ENCODE measurements at regions of chr6 and their contacts with region 1.

Region 1: GRCh38 chr6:137866914-137867684 is at the start of gene TNFAIP3:
- DNase-seq: peak; percentile 96
- CTCF ChIP-seq: peak; percentile 87

Region 2: GRCh38 chr6:137697267-137697938 is 169.7 kb before region 1 on chr6:
- CTCF ChIA-PET with region 1: interaction called, 10 read pairs
- POLR2A ChIA-PET with region 1: no interaction called
- DNase-seq: no peak
- CTCF ChIP-seq: peak; percentile 26

Region 3: GRCh38 chr6:137799950-137800568 is 67.0 kb before region 1 on chr6:
- CTCF ChIA-PET with region 1: interaction called, 29 read pairs
- POLR2A ChIA-PET with region 1: no interaction called
- DNase-seq: peak; percentile 53
- CTCF ChIP-seq: peak; percentile 60

Region 4: GRCh38 chr6:137878486-137879285 is 11.6 kb after region 1 on chr6:
- CTCF ChIA-PET with region 1: interaction called, 58 read pairs
- POLR2A ChIA-PET with region 1: interaction called, 14 read pairs
- DNase-seq: no peak
- CTCF ChIP-seq: no peak

Region 5: DNA sequence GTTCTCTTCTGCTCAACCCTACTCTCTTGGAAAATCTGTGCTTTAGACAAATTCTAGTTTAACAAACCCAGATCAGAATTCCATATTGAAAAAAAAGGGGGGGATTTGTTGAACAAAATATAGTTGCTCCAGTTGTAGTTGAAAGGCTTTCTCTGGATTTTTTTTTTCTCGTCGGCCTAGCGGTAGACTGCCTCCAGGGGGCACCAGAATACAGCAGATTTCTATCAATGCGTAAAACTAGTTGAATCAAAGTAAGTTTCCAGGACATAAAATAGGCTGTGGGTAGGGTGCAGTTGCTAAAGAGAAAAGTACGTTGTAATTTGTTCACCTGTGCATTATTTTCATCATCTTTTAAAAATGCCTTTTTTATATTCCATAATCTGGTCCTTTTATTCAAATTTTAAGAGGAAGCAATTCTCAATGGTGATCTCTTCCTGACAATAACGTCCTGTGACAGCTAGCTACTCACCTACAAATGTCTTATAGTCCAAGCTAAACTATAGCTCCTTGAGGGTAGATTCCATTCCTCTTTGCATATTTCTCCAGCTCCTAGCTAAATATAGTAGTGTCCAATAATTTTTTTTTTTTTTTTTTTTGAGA is 134.8 kb after region 1 on chr6:
- CTCF ChIA-PET with region 1: interaction called, 55 read pairs
- POLR2A ChIA-PET with region 1: interaction called, 5 read pairs
- DNase-seq: peak; percentile 40
- CTCF ChIP-seq: peak; percentile 95

Region 6: GRCh38 chr6:138099832-138100231 is 232.7 kb after region 1 on chr6:
- CTCF ChIA-PET with region 1: no interaction called
- POLR2A ChIA-PET with region 1: no interaction called
- DNase-seq: no peak
- CTCF ChIP-seq: no peak

Region 7: GRCh38 chr6:138440758-138441357 is 573.8 kb after region 1 on chr6:
- CTCF ChIA-PET with region 1: no interaction called
- POLR2A ChIA-PET with region 1: no interaction called
- DNase-seq: no peak
- CTCF ChIP-seq: no peak